Gastrocnemius medialis (tissue), 4 donors: ENCODE measurements at regions of chr4 and their contacts with region 1.

Region 1: GRCh38 chr4:158671915-158672806 is at the start of gene ETFDH:
- DNase-seq: peak; percentile 97 to 99
- ATAC-seq: peak; percentile 89 to 94
- H3K4me3 ChIP-seq: peak within 1 kb of the TSS; percentile 72 to 93 (median 82)
- H3K27ac ChIP-seq: peak within 1 kb of the TSS; percentile 94 to 99 (median 97)
- H3K4me1 ChIP-seq: peaks cover 24 to 26% of the 10 kb centered on the region in 2 donors
- H3K27me3 ChIP-seq: no peaks in the 10 kb centered on the region
- CTCF ChIP-seq: peak; percentile 64 to 78 (median 76)
- POLR2A ChIP-seq: peak; percentile 86 to 91
- total RNA-seq, gene ETFDH: 53.1 to 83.1 (median 62.0) TPM

Region 2: GRCh38 chr4:157942017-157942416 is 730.1 kb before region 1 on chr4:
- in situ Hi-C with region 1: no loop called
- intact Hi-C with region 1: no loop called
- DNase-seq: no peak
- ATAC-seq: no peak
- H3K4me3 ChIP-seq: no peak overlapping the region
- H3K27ac ChIP-seq: no peak overlapping the region
- H3K4me1 ChIP-seq: no peaks in the 10 kb centered on the region
- H3K27me3 ChIP-seq: no peaks in the 10 kb centered on the region
- CTCF ChIP-seq: no peak
- POLR2A ChIP-seq: no peak

Region 3: GRCh38 chr4:158560284-158560683 is 111.9 kb before region 1 on chr4:
- in situ Hi-C with region 1: no loop called
- intact Hi-C with region 1: no loop called
- DNase-seq: no peak
- ATAC-seq: no peak
- H3K4me3 ChIP-seq: no peak overlapping the region
- H3K27ac ChIP-seq: no peak overlapping the region
- H3K4me1 ChIP-seq: no peaks in the 10 kb centered on the region
- H3K27me3 ChIP-seq: no peaks in the 10 kb centered on the region
- CTCF ChIP-seq: no peak
- POLR2A ChIP-seq: no peak

Region 4: DNA sequence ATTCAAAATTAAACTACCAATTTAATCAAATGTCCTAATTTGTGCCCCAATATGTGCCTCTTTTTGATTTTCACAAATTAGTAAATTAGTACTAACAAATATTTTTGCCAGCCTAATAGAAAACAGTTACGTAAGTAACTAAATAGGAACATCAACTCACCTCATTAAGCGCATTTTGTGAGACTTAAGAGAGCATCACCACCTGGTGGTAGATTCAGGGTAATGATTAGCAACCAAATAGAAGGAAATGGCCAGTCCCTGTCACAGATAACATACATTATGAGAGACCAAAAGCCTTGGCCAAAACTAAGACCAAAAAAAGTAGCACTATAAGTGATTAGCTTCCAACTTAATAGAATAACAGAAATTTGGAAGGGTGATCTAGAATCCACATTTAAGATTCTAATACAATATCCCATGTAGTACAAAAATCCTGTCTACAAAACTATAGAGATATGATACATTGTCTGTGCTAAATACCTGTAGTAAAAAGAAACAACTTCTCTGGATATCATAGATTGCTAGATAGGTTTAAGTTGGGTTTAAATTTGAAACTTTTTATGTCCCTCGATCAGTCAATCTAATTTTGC is 47.2 kb before region 1 on chr4:
- in situ Hi-C with region 1: no loop called
- intact Hi-C with region 1: loop called (anchors 1 kb)
- DNase-seq: peak in 1 of 2 donors; percentile 3
- ATAC-seq: peak; percentile 73 to 82
- H3K4me3 ChIP-seq: peak overlapping the region in 2 of 4 donors; percentile 5 to 9
- H3K27ac ChIP-seq: peak overlapping the region; percentile 55 to 82 (median 70)
- H3K4me1 ChIP-seq: peaks cover 16 to 21% of the 10 kb centered on the region in 2 donors
- H3K27me3 ChIP-seq: no peaks in the 10 kb centered on the region
- CTCF ChIP-seq: peak; percentile 52 to 72 (median 68)
- POLR2A ChIP-seq: no peak

Region 5: GRCh38 chr4:158722917-158723793 is 51.0 kb after region 1 on chr4 and contains the start of gene PPID:
- in situ Hi-C with region 1: loop called in 1 of 4 experiments (anchors 10 kb)
- intact Hi-C with region 1: loop called (anchors 2 kb)
- DNase-seq: peak; percentile 68 to 81
- ATAC-seq: peak; percentile 92 to 95
- H3K4me3 ChIP-seq: peak within 1 kb of the TSS; percentile 72 to 95 (median 94)
- H3K27ac ChIP-seq: peak within 1 kb of the TSS; percentile 90 to 96 (median 92)
- H3K4me1 ChIP-seq: peaks cover 17 to 30% of the 10 kb centered on the region in 2 donors
- H3K27me3 ChIP-seq: no peaks in the 10 kb centered on the region
- CTCF ChIP-seq: no peak
- POLR2A ChIP-seq: peak; percentile 87
- total RNA-seq, gene PPID: 30.1 to 81.8 (median 40.6) TPM

Region 6: DNA sequence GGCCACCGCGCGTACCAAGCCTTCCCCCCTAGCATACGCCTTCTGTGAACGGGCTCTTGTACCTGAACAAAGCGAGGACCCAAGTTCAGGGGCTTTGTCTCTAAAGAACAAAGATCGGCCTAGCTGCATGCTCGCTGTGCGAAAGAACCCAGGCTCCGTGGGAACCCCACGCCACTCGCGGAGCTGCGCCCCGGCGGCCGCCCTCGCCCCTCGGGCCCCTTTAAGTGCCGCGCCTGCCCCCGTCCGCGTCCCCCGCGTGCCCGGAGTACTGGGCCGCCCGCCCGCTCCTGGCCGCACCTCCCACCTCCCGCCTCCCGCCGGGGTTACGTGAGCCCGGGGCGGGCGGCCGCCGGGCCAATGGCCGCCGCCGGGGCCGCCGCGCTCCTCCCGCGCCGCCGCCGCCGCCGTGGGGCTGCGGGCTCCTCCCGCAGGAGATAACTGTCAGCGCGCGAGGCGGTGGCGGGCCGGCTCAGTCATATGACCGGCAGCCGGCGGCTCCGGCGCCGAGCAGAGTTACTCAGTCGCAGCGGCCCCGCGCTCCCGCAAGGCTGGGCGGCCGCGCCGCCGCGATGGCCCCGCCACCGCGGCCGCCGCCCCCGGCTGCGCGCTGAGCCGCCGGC is 96.5 kb after region 1 on chr4 and contains the start of gene FNIP2:
- in situ Hi-C with region 1: no loop called
- intact Hi-C with region 1: loop called (anchors 2 kb)
- DNase-seq: peak; percentile 74 to 83
- ATAC-seq: peak; percentile 82 to 87
- H3K4me3 ChIP-seq: peak within 1 kb of the TSS; percentile 78 to 95 (median 86)
- H3K27ac ChIP-seq: peak within 1 kb of the TSS; percentile 91 to 97 (median 95)
- H3K4me1 ChIP-seq: peaks cover 38 to 46% of the 10 kb centered on the region in 2 donors
- H3K27me3 ChIP-seq: no peaks in the 10 kb centered on the region
- CTCF ChIP-seq: no peak
- POLR2A ChIP-seq: peak; percentile 83 to 86
- total RNA-seq, gene FNIP2: 9.9 to 32.8 (median 22.2) TPM

Region 7: DNA sequence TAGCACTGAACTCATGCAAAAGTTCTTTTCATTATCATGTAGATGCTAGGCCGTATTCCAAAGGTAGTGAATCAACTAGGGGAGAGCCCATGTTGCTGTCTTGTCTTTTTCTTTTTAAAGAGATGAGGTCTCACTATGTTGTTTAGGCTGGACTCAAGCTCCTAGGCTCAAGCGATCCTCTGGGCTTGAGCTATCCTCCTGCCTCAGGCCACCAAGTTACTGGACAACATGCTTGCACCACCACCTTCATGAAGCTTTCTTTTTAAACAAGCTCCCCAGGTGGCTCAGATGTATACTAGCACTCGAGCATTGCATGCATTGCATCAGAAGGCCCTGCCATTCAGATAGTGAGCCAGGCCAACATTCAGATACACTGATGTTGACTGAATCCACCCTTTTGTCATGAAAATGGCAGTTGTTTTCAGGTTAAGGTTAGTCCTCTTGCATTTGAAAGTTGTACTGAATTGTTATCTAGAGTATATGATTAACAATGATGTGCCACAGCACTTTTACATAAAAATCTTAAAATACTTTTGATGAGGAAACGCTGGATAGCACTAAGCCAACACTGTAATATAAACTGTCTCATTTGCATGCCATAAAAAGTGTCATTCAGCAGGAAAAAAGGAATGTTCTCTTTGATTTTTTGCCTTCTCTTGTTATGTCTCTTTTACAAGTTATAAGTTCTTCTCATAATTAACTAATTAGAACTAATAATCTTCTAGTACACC is 173.3 kb after region 1 on chr4:
- in situ Hi-C with region 1: no loop called
- intact Hi-C with region 1: loop called (anchors 5 kb)
- DNase-seq: no peak
- ATAC-seq: no peak
- H3K4me3 ChIP-seq: no peak overlapping the region
- H3K27ac ChIP-seq: no peak overlapping the region
- H3K4me1 ChIP-seq: peaks cover 5 to 19% of the 10 kb centered on the region in 2 donors
- H3K27me3 ChIP-seq: no peaks in the 10 kb centered on the region
- CTCF ChIP-seq: no peak
- POLR2A ChIP-seq: no peak

Region 8: DNA sequence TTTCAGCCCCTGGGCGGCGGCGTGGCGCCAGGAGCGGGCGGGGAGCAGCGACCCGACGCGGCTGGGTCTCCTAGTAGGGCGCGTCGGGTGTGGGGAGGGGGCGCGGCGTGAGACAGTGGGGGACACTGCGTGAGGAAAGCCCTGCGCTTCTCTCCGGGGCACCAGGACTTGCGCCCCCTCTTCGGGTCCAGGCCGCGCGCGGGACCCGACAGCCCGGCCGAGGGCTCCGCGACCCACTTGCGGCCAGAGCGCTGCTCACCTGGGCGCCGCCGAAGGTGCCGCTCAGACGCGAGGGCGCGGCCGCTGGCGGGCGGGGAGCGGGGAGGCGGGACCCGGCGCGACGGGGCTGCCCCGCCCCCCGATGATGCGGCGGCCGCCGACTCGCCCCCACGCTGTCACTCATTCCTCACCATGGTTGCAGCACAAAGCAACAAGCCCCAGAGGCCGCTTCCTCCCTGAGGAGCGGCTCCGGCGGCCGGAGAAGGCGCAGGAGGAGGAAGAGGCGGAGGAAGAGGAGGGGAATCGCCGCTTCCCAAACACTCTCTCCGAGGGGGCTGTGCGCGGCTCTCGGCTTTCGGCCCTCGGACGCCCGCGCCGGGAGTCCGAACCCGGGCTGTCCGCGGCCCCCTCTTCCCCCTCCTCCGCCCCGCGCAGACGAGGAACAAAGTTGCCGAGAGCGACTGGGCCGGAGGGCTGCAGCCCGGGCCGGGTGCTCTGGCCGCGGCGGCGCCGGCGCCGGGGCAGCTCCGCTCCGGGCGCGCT is 430.6 kb after region 1 on chr4 and contains the start of gene RAPGEF2:
- in situ Hi-C with region 1: no loop called
- intact Hi-C with region 1: loop called (anchors 5 kb)
- DNase-seq: peak; percentile 90 to 92
- ATAC-seq: peak; percentile 93
- H3K4me3 ChIP-seq: peak within 1 kb of the TSS; percentile 67 to 97 (median 93)
- H3K27ac ChIP-seq: peak within 1 kb of the TSS; percentile 93 to 96 (median 95)
- H3K4me1 ChIP-seq: peaks cover 35 to 43% of the 10 kb centered on the region in 2 donors
- H3K27me3 ChIP-seq: no peaks in the 10 kb centered on the region
- CTCF ChIP-seq: peak in 1 of 5 experiments; percentile 10
- POLR2A ChIP-seq: peak; percentile 95 to 98
- total RNA-seq, gene RAPGEF2: 32.9 to 42.3 (median 38.7) TPM